ENCODE measurements at regions of chr14 and their contacts with region 1.

Region 1: DNA sequence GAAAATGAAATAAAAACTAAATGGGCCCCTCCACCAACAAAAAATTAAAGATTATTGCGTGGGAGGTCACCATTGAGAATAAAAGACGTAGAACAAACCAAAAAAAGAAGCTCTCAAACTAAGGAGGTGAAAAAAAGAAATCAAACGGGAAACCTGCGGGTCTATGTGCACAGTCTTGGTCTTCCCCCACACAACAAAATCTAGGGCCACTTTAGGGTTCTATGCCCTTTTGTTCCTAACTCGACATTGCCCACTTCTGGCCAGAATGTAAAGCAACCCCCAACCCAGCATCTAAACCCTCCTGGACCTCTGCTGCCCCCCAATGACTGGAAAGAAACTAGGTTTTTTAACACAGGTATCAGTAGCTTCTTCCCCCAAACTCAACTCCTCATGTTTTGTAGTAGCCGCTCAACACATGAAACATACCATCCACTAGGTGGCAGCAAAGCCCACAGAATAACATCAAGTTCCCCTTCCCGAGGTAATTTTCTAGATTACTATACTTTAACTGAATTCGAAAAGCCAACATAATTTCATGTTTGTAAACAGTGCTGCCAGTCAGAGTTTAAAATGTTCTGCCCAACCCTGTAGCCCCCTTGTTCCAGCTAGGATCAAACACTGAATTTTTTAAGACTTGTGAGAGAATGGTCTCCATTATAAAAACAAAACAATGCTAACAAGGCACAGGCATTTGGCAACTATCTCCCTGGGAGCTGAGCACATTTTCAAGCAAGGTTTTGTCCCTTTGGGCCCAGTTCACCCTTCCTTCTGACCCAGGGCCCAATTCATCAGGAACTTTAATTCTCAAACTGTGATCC is 18.7 kb downstream of the DAD1 start:
- DNase-seq: peak; percentile 91
- H3K4me3 Mint-ChIP-seq: peak overlapping the region; percentile 80
- H3K27ac Mint-ChIP-seq: peak overlapping the region; percentile 99
- H3K4me1 Mint-ChIP-seq: peaks cover 74% of the 10 kb centered on the region
- H3K27me3 Mint-ChIP-seq: no peaks in the 10 kb centered on the region

Region 2: GRCh38 chr14:21917699-21918436 is 652.5 kb before region 1 on chr14:
- CTCF ChIA-PET with region 1: interaction called, 29 read pairs
- POLR2A ChIA-PET with region 1: interaction called, 4 read pairs
- intact Hi-C with region 1: loop called (anchors 1 kb)
- DNase-seq: peak; percentile 61
- H3K4me3 Mint-ChIP-seq: peak overlapping the region; percentile 73
- H3K27ac Mint-ChIP-seq: peak overlapping the region; percentile 73
- H3K4me1 Mint-ChIP-seq: peaks cover 58% of the 10 kb centered on the region
- H3K27me3 Mint-ChIP-seq: no peaks in the 10 kb centered on the region

Region 3: GRCh38 chr14:22112004-22112403 is 458.3 kb before region 1 on chr14:
- CTCF ChIA-PET with region 1: interaction called, 19 read pairs
- POLR2A ChIA-PET with region 1: interaction called, 3 read pairs
- intact Hi-C with region 1: no loop called
- DNase-seq: peak; percentile 50
- H3K4me3 Mint-ChIP-seq: peak overlapping the region; percentile 74
- H3K27ac Mint-ChIP-seq: peak overlapping the region; percentile 86
- H3K4me1 Mint-ChIP-seq: peaks cover 5% of the 10 kb centered on the region
- H3K27me3 Mint-ChIP-seq: no peaks in the 10 kb centered on the region

Region 4: DNA sequence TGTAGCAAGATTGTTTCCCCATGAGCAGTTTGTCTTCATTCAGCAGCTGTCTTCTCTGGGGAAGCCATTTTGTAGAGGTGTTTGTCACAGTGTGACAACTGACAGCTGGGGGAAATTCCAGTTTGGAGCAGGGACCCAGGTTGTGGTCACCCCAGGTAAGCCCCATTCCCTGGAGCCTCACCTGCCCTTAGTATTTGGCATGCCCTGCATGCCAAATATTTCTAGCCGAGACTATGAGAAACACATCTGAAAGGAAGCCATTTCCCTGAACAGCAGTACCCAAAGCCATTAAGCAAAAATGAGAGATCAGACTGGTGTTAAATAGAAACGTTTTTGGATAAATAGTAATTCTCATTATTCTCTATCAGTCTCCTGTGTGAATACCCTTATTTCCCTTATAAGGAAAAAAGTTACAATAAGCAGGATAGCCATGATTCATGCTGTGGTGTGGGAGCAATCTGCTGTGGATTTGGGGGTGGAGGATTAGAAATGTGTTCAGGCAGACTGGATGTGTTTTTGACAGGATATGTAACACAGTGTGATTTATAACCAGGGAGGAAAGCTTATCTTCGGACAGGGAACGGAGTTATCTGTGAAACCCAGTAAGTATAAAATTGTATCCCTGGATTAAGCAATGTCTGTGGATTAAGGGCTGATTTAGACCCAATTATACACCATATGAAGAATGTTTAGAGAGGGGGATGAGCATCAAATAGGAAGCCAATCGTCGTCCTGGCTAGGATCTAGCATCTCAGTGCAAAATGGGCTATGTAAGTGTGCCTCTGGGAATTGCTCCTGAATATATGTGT is 50.3 kb before region 1 on chr14:
- CTCF ChIA-PET with region 1: interaction called, 12 read pairs
- POLR2A ChIA-PET with region 1: interaction called, 3 read pairs
- intact Hi-C with region 1: loop called (anchors 2 kb)
- DNase-seq: no peak
- H3K4me3 Mint-ChIP-seq: peak overlapping the region; percentile 83
- H3K27ac Mint-ChIP-seq: peak overlapping the region; percentile 99
- H3K4me1 Mint-ChIP-seq: peaks cover 88% of the 10 kb centered on the region
- H3K27me3 Mint-ChIP-seq: no peaks in the 10 kb centered on the region

Region 5: GRCh38 chr14:22589096-22589839 is 18.9 kb after region 1 on chr14 and contains the start of gene DAD1:
- CTCF ChIA-PET with region 1: interaction called, 82 read pairs
- POLR2A ChIA-PET with region 1: interaction called, 45 read pairs
- intact Hi-C with region 1: loop called (anchors 1 kb)
- DNase-seq: peak; percentile 100
- H3K4me3 Mint-ChIP-seq: peak within 1 kb of the TSS; percentile 99
- H3K27ac Mint-ChIP-seq: peak within 1 kb of the TSS; percentile 100
- H3K4me1 Mint-ChIP-seq: peaks cover 64% of the 10 kb centered on the region
- H3K27me3 Mint-ChIP-seq: peaks cover 5% of the 10 kb centered on the region
- total RNA-seq, gene DAD1: 292 to 305 TPM

Region 6: GRCh38 chr14:22822571-22823098 is 252.3 kb after region 1 on chr14:
- CTCF ChIA-PET with region 1: interaction called, 25 read pairs
- POLR2A ChIA-PET with region 1: no interaction called
- intact Hi-C with region 1: loop called (anchors 2 kb)
- DNase-seq: peak; percentile 77
- H3K4me3 Mint-ChIP-seq: peak overlapping the region; percentile 63
- H3K27ac Mint-ChIP-seq: no peak overlapping the region
- H3K4me1 Mint-ChIP-seq: peaks cover 26% of the 10 kb centered on the region
- H3K27me3 Mint-ChIP-seq: peaks cover 12% of the 10 kb centered on the region

Region 7: DNA sequence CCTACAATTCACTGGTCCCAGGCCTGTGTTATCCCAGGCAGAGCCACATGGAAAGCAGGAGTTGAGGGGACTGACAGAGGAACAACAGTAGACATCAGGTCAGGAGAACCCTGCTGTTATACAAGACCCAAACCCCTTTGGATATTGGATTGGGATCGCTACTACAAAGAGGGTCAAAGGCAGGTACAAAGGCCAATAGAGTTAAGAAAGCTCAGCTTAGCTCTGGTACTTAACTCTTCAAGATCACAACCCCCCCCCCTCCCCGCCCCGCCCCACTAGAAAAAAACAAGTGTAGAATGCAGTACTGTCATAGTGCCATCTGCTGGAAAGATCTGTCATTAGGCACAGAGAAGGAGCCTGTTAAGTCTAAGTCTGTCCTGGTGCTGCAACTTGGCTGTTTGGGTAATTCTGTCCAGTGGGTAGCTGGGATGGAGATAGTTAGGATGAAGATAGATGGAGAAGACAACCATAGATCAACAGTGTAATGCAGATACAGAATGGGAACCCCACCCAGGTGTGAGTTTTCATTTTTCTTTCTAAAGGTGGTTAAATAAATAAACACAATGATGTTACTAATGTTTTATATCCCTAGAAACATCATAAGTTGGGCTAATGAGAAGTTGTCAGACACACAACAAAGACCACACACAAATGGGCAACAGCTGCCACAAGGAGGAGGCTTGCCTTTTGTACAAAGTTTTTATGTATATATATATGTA is 329.9 kb after region 1 on chr14:
- CTCF ChIA-PET with region 1: interaction called, 18 read pairs
- POLR2A ChIA-PET with region 1: no interaction called
- intact Hi-C with region 1: no loop called
- DNase-seq: peak; percentile 44
- H3K4me3 Mint-ChIP-seq: no peak overlapping the region
- H3K27ac Mint-ChIP-seq: no peak overlapping the region
- H3K4me1 Mint-ChIP-seq: peaks cover 11% of the 10 kb centered on the region
- H3K27me3 Mint-ChIP-seq: no peaks in the 10 kb centered on the region

Measured in activated CD4-positive, alpha-beta memory T cell treated with anti-CD3 and anti-CD28 coated beads for 36 hours (primary cell).